Left ventricle myocardium inferior (tissue), 1 donor: ENCODE measurements at regions of chr4 and their contacts with region 1.

Region 1: GRCh38 chr4:57037982-57038604 is 59.4 kb downstream of the POLR2B start:
- DNase-seq: peak; percentile 58
- H3K4me3 ChIP-seq: no peak overlapping the region
- H3K27ac ChIP-seq: peak overlapping the region; percentile 49
- H3K4me1 ChIP-seq: peaks cover 50% of the 10 kb centered on the region
- H3K27me3 ChIP-seq: no peaks in the 10 kb centered on the region
- CTCF ChIP-seq: peak; percentile 90

Region 2: DNA sequence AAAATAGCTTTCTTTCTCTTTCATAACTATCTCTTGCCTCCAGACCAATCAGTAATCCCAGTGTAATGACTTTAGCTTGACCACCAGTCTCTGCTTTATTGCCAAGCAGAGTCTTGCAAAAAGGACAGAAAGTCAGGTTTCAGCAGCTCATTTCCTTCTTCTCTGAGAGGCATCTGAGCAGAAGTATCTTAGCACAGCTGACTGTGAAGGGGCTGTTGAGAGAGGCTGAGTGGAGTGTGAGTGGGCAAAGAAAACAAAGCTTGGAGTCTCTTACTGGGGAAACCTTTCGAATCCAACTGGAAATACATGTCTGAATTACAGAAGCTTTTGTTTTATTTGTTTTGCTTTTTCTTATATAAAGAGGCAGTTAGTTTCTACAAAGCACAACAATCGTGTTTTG is 242.4 kb after region 1 on chr4:
- intact Hi-C with region 1: loop called (anchors 10 kb)
- DNase-seq: no peak
- H3K4me3 ChIP-seq: no peak overlapping the region
- H3K27ac ChIP-seq: no peak overlapping the region
- H3K4me1 ChIP-seq: no peaks in the 10 kb centered on the region
- H3K27me3 ChIP-seq: peaks cover 3% of the 10 kb centered on the region
- CTCF ChIP-seq: no peak